ENCODE measurements at regions of chr19 and their contacts with region 1.

Region 1: GRCh38 chr19:8005534-8006256 is at the start of gene ELAVL1:
- DNase-seq: peak; percentile 97
- CTCF ChIP-seq: no peak

Region 2: GRCh38 chr19:7959211-7959610 is 46.5 kb before region 1 on chr19:
- CTCF ChIA-PET with region 1: no interaction called
- POLR2A ChIA-PET with region 1: no interaction called
- DNase-seq: no peak
- CTCF ChIP-seq: no peak

Region 3: GRCh38 chr19:7970716-7971448 is 34.8 kb before region 1 on chr19:
- CTCF ChIA-PET with region 1: interaction called, 14 read pairs
- POLR2A ChIA-PET with region 1: no interaction called
- DNase-seq: peak; percentile 60
- CTCF ChIP-seq: peak; percentile 71

Region 4: GRCh38 chr19:7986321-7987083 is 19.2 kb before region 1 on chr19:
- CTCF ChIA-PET with region 1: interaction called, 15 read pairs
- POLR2A ChIA-PET with region 1: no interaction called
- DNase-seq: no peak
- CTCF ChIP-seq: no peak

Region 5: DNA sequence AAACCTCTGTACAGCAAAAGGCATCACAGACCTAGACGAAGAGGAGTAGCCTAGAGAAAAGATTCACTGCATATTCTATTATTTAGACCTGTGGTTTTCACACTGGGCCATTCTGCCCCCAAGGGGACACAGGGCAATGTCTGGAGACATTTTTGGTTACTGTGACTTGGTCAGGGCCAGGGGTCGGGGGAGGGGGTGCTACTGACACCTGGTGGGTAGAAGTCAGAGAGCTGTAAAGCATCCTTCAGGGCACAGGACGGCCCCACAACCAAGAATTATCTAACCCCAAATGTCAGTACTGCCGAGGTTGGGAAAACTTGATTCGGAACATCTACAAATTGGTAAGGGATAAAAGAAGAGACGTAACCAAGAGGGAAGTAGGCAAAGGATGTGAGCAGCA is 11.6 kb before region 1 on chr19:
- CTCF ChIA-PET with region 1: interaction called, 10 read pairs
- POLR2A ChIA-PET with region 1: no interaction called
- DNase-seq: no peak
- CTCF ChIP-seq: no peak

Region 6: DNA sequence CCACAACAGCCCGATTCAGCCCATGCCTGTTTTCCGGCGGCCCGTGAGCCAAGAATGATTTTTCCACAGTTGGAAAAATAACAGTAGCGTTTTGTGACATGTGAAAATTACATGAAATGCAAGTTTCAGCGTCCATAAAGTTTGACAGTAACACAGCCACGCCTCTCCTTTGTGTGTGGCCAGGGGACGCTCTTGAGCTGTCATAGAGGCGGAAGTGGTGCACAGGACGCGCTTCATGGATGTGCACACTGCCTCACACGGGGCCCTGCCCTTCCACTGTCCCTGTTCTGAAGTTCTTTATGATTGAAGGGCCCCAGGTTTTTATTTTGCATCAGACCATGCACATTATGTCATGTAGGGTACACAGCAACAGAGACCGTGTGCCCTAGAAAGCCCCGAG is 12.1 kb after region 1 on chr19:
- CTCF ChIA-PET with region 1: interaction called, 13 read pairs
- POLR2A ChIA-PET with region 1: interaction called, 5 read pairs
- DNase-seq: peak; percentile 75
- CTCF ChIP-seq: peak; percentile 66

Region 7: DNA sequence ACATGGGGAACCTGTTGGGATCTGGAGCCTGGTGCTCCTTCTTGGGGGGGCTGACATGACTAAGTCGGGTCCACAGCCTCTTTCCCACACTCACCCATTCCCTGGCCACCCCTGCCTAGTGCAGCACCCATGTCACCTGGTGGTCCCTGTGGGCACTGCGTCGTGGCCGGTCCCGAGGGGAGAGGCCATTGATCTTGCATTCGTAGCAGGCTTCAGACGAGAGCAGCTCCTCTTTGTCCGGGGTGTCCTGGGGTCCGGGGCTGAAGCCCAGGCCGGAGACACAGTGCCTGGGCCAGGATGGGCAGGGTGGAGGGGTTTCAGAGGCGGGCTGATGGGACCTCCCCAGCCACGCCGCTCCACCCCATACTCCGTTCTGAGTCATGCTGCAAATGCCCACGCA is 66.2 kb after region 1 on chr19:
- CTCF ChIA-PET with region 1: no interaction called
- POLR2A ChIA-PET with region 1: no interaction called
- DNase-seq: no peak
- CTCF ChIP-seq: no peak

Measured in GM10248 (cell line).